A549 (cell line): ENCODE measurements at regions of chr21 and their contacts with region 1.

Region 1: GRCh38 chr21:15034126-15034853 is 30.5 kb downstream of the NRIP1 start:
- DNase-seq: no peak
- ATAC-seq: no peak
- H3K4me3 ChIP-seq: no peak overlapping the region
- H3K27ac ChIP-seq: peak overlapping the region in 1 of 2 experiments; percentile 14; a peak in 1 of 6 replicates
- H3K4me1 ChIP-seq: peaks cover 40% of the 10 kb centered on the region; the same call in 2 of the 3 replicates
- CTCF ChIP-seq: no peak
- EP300 ChIP-seq: no peak
- POLR2A ChIP-seq: no peak
- RAD21 ChIP-seq: no peak

Region 2: GRCh38 chr21:15121655-15122120 is 87.4 kb after region 1 on chr21:
- CTCF ChIA-PET with region 1: no interaction called
- POLR2A ChIA-PET with region 1: interaction called, 10 read pairs
- DNase-seq: peak in 1 of 2 experiments; percentile 28
- ATAC-seq: peak; percentile 79 to 85; a peak in 5 of 6 replicates
- H3K4me3 ChIP-seq: peak overlapping the region; percentile 10; the same call in 1 of the 3 replicates
- H3K27ac ChIP-seq: peak overlapping the region; percentile 75 to 85
- H3K4me1 ChIP-seq: peaks cover 23% of the 10 kb centered on the region
- CTCF ChIP-seq: no peak
- EP300 ChIP-seq: no peak
- POLR2A ChIP-seq: no peak
- RAD21 ChIP-seq: no peak